Natural killer cell (primary cell): ENCODE measurements at regions of chr20 and their contacts with region 1.

Region 1: GRCh38 chr20:17617551-17618223 is 47.8 kb downstream of the DSTN start:
- DNase-seq: peak; percentile 48 to 72
- ATAC-seq: peak; percentile 30 to 44 (median 30)
- H3K4me3 ChIP-seq: no peak overlapping the region
- H3K4me3 Mint-ChIP-seq: no peak overlapping the region
- H3K27ac ChIP-seq: no peak overlapping the region
- H3K27ac Mint-ChIP-seq: no peak overlapping the region
- H3K4me1 ChIP-seq: peaks cover 36% of the 10 kb centered on the region
- H3K4me1 Mint-ChIP-seq: peaks cover 14 to 20% of the 10 kb centered on the region in 2 donors
- H3K27me3 ChIP-seq: no peaks in the 10 kb centered on the region
- H3K27me3 Mint-ChIP-seq: no peaks in the 10 kb centered on the region
- CTCF ChIP-seq: peak; percentile 67

Region 2: DNA sequence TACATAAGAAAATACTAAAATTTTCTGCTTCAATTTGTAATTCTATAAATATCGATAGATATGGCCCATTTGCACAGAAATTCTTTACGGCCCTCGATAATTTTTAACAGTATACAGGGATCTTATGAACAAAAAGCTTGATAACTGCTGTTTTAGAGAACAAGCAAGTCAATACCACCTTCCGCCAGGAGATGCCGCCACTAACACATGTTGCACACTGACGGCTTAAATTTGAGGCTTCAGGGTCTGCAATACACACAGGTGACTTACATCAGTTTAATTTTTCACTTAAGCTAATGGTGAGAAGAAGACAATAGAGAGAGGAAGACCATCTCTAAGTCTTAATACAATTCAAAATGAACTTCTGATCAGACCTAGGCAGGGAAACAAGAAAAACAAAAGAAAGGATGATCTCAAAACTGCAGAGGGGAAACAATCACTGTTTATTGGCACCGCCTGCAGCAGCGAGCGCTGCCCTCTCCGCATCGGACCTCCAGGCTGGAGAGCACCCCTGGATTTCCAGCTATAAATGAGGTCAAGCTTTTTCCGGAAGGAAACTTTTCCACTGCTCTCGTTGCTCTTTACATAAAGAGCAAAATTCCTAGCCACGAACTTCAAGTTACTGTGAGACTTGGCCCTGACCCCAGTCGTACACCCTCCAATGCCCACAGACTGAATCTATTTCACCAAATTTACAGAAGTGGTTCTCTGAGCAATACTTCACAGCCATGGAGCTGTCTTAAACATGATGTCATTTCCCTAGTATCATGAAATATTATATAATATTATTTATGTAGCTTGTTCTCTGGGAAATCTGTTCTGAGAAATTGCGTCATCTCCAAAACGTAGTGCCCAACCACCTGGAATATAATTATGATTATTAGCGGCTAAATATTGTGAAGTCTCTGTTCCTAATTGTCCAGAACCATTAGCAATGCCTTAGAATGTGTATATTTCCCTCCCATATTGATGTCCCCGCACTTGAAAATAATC is 815.5 kb before region 1 on chr20:
- intact Hi-C with region 1: loop called (anchors 5 kb)
- DNase-seq: peak in 1 of 2 donors; percentile 62
- ATAC-seq: peak in 1 of 3 donors; percentile 54
- H3K4me3 ChIP-seq: no peak overlapping the region
- H3K4me3 Mint-ChIP-seq: no peak overlapping the region
- H3K27ac ChIP-seq: no peak overlapping the region
- H3K27ac Mint-ChIP-seq: no peak overlapping the region
- H3K4me1 ChIP-seq: no peaks in the 10 kb centered on the region
- H3K4me1 Mint-ChIP-seq: no peaks in the 10 kb centered on the region
- H3K27me3 ChIP-seq: peaks cover 7% of the 10 kb centered on the region
- H3K27me3 Mint-ChIP-seq: peaks cover 24 to 37% of the 10 kb centered on the region in 2 donors
- CTCF ChIP-seq: peak; percentile 71